WTC11 (cell line): ENCODE measurements at regions of chr15 and their contacts with region 1.

Region 1: GRCh38 chr15:55917881-55918296 is 75.5 kb downstream of the NEDD4 start:
- DNase-seq: no peak
- ATAC-seq: no peak
- H3K4me3 Mint-ChIP-seq: no peak overlapping the region
- H3K27ac Mint-ChIP-seq: no peak overlapping the region
- H3K4me1 Mint-ChIP-seq: peaks cover 4% of the 10 kb centered on the region
- H3K27me3 Mint-ChIP-seq: no peaks in the 10 kb centered on the region
- CTCF ChIP-seq: no peak

Region 2: DNA sequence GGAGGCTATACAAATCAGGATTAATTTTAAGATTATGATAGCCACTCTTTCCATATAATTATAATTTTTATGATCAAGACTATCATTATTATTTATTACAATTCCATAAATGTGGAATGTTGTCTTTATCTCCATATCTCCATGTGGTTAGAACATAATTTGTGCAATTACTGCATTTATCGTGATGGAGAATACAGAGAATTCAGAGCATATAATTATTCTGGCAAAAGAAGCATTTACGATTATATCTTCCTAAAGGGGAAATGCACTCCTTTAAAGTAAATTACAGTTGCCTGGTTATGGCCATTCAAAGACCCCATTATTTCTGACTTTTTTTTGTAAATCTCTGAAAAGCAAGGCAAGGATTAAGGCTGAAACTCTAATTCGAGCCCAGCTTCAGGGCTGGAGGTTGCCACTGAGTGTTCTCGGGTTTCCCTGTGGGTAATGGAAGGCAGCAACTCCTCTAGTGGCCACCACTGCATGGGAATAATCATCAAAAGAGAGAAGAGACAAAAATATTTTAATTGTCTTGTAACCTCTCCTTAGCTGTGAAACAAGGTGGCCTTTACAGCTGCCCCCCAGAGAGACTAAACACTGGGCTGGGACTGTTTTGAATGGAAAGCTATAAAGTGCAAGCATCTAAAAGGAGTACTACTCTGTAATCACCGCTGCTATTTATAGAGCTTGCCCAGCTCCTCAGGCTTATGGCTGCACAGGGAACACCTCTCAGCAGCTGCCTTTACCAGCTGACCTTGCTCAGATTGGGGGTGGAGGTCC is 115.1 kb before region 1 on chr15:
- CTCF ChIA-PET with region 1: no interaction called
- POLR2A ChIA-PET with region 1: no interaction called
- DNase-seq: no peak
- ATAC-seq: peak; percentile 38; the same call in 1 of the 2 replicates
- H3K4me3 Mint-ChIP-seq: no peak overlapping the region
- H3K27ac Mint-ChIP-seq: no peak overlapping the region
- H3K4me1 Mint-ChIP-seq: peaks cover 18% of the 10 kb centered on the region
- H3K27me3 Mint-ChIP-seq: peaks cover 5% of the 10 kb centered on the region; the same call in 1 of the 2 replicates
- CTCF ChIP-seq: no peak

Region 3: GRCh38 chr15:55897560-55898336 is 20.1 kb before region 1 on chr15:
- CTCF ChIA-PET with region 1: interaction called, 19 read pairs
- POLR2A ChIA-PET with region 1: no interaction called
- DNase-seq: peak; percentile 67
- ATAC-seq: peak; percentile 95
- H3K4me3 Mint-ChIP-seq: no peak overlapping the region
- H3K27ac Mint-ChIP-seq: no peak overlapping the region
- H3K4me1 Mint-ChIP-seq: peaks cover 8% of the 10 kb centered on the region
- H3K27me3 Mint-ChIP-seq: no peaks in the 10 kb centered on the region
- CTCF ChIP-seq: peak; percentile 62

Region 4: DNA sequence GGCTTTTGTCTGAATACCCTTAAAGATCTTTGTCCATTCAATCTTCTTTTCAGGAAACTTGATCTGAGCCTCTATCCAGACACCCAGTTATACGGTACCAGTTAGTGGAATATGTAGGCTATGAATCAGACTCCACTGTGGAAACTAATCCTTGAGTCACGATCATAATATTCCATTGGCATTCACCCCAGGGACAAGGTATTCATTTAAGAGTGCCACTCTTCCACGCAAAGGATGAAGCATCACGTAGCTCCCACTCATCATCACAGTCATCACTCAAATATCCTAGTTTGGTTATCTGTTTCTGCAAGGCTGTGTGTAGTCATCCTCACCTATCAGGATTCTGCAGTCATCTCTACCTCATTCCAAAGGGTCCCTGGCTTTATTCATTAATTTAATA is 10.1 kb before region 1 on chr15:
- CTCF ChIA-PET with region 1: interaction called, 11 read pairs
- POLR2A ChIA-PET with region 1: no interaction called
- DNase-seq: no peak
- ATAC-seq: no peak
- H3K4me3 Mint-ChIP-seq: no peak overlapping the region
- H3K27ac Mint-ChIP-seq: no peak overlapping the region
- H3K4me1 Mint-ChIP-seq: no peaks in the 10 kb centered on the region
- H3K27me3 Mint-ChIP-seq: no peaks in the 10 kb centered on the region
- CTCF ChIP-seq: no peak

Region 5: DNA sequence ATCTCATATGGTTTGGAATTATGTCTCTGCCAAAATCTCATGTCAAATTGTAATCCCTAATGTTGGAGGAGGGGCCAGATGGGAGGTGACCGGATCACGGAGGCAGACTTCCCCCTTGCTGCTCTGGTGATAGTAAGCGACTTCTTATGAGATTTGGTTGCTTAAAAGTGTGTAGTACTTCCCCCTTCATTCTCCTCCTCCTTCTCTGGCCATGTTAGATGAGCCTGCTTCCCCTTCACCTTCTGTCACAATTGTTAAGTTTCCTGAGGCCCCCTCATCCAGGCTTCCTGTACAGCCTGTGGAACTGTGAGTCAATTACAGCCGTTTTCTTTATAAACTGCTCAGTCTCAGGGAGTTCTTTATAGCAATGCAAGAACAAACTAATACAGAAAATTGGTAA is 24.4 kb after region 1 on chr15:
- CTCF ChIA-PET with region 1: no interaction called
- POLR2A ChIA-PET with region 1: no interaction called
- DNase-seq: no peak
- ATAC-seq: no peak
- H3K4me3 Mint-ChIP-seq: no peak overlapping the region
- H3K27ac Mint-ChIP-seq: no peak overlapping the region
- H3K4me1 Mint-ChIP-seq: no peaks in the 10 kb centered on the region
- H3K27me3 Mint-ChIP-seq: peaks cover 5% of the 10 kb centered on the region; the same call in 1 of the 2 replicates
- CTCF ChIP-seq: no peak

Region 6: GRCh38 chr15:56028430-56028829 is 110.5 kb after region 1 on chr15:
- CTCF ChIA-PET with region 1: no interaction called
- POLR2A ChIA-PET with region 1: no interaction called
- DNase-seq: no peak
- ATAC-seq: no peak
- H3K4me3 Mint-ChIP-seq: no peak overlapping the region
- H3K27ac Mint-ChIP-seq: no peak overlapping the region
- H3K4me1 Mint-ChIP-seq: no peaks in the 10 kb centered on the region
- H3K27me3 Mint-ChIP-seq: peaks cover under 1% of the 10 kb centered on the region; the same call in 1 of the 2 replicates
- CTCF ChIP-seq: no peak